OCI-LY7 (cell line): ENCODE measurements at regions of chr1 and their contacts with region 1.

Region 1: DNA sequence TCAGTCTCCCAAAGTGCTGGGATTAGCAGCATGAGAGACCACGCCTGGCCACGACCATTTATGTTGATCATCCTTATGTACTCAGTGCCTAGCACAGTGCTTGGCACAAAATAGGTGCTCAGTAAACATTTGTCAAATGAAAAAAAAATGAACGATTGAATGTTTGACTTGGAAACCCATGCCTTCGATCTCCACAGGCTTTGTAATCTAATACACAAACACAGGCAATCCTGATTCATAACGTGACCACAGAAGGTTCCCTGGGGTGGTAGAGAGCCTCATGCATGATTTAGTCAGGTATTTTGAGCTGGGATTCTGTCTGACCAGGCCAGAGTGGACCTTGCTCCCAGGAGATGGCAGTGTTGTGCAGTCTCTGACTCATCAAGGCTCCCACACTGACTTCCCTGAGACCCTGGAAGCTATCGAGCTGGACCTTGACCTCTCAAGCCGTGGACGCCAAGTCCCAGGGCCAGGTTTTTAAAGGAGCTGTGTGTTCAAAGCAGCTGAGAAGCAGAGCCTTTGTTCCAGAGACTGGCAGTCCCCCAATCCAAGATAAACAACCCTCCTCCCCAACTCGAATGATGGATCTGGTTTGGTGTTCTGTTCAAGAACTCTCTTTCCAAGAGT is 81.1 kb downstream of the PGM1 start:
- DNase-seq: peak; percentile 45
- H3K4me3 ChIP-seq: no peak overlapping the region
- H3K27ac ChIP-seq: no peak overlapping the region
- H3K4me1 ChIP-seq: no peaks in the 10 kb centered on the region
- CTCF ChIP-seq: peak; percentile 69

Region 2: DNA sequence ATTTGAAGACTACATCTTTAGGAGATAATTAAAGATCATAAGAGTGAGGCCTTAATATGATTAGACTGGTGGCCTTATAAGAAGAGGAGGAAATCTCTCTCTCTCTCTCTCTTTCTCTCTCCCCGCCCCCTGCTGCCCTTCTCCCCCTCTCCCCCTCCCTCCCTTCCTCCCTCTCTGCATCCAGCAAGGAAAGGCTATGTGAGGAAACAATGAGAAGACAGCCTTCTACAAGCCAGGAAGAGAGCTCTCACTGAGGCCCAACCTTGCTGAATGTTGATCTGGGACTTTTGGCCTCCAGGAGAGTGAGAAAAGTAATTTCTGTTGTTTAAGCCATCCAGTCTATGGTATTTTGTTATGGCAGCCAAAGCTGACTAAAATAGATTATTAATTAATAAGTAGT is 330.4 kb before region 1 on chr1:
- CTCF ChIA-PET with region 1: no interaction called
- POLR2A ChIA-PET with region 1: no interaction called
- intact Hi-C with region 1: no loop called
- DNase-seq: no peak
- H3K4me3 ChIP-seq: no peak overlapping the region
- H3K27ac ChIP-seq: no peak overlapping the region
- H3K4me1 ChIP-seq: no peaks in the 10 kb centered on the region
- CTCF ChIP-seq: no peak

Region 3: DNA sequence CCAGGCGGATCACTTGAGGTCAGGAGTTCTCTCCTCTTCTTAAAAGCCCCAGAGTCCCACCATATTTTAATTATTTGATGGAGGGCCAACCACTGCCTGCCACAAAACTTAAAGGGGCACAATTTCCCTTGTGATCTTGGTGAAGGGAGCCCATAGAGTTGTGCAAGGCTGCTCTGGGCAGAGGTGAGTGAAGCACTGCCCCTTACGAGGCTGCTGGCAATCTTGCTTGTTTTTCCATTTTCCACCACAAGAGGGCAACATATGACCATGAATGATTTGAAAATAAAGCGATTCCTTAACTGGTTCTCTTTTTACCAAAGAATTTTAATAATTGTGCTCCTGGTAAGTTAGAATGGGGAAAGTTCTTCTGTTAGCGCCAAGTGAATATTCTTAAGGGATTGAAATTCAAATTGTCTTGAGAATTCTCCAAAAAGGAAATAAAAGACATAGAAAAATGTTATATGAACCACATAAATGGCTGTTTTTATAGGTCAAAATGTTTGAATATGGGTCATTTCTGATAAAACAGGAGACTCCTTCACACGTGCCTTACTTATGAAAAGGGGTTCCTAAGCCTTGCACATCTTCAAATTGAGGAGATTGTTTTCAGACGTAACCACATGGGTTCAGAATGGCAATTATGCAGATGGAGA is 58.5 kb before region 1 on chr1:
- CTCF ChIA-PET with region 1: no interaction called
- POLR2A ChIA-PET with region 1: no interaction called
- intact Hi-C with region 1: no loop called
- DNase-seq: peak; percentile 68
- H3K4me3 ChIP-seq: no peak overlapping the region
- H3K27ac ChIP-seq: no peak overlapping the region
- H3K4me1 ChIP-seq: peaks cover 4% of the 10 kb centered on the region
- CTCF ChIP-seq: peak; percentile 88

Region 4: GRCh38 chr1:64163970-64164369 is 489.6 kb after region 1 on chr1:
- CTCF ChIA-PET with region 1: no interaction called
- POLR2A ChIA-PET with region 1: interaction called, 11 read pairs
- intact Hi-C with region 1: no loop called
- DNase-seq: no peak
- H3K4me3 ChIP-seq: no peak overlapping the region
- H3K27ac ChIP-seq: no peak overlapping the region
- H3K4me1 ChIP-seq: no peaks in the 10 kb centered on the region
- CTCF ChIP-seq: peak; percentile 43; the same call in 1 of the 2 replicates